Activated B cell treated with CpG ODN at 0.5 μM for 24 hours (primary cell): ENCODE measurements at regions of chr16 and their contacts with region 1.

Region 1: GRCh38 chr16:48365581-48366164 is 19.5 kb downstream of the SIAH1 start:
- DNase-seq: peak; percentile 74
- ATAC-seq: peak; percentile 94
- H3K4me3 Mint-ChIP-seq: peak overlapping the region; percentile 88
- H3K27ac Mint-ChIP-seq: peak overlapping the region; percentile 96
- H3K4me1 Mint-ChIP-seq: peaks cover 65% of the 10 kb centered on the region
- H3K27me3 Mint-ChIP-seq: no peaks in the 10 kb centered on the region
- CTCF ChIP-seq: no peak

Region 2: GRCh38 chr16:46973207-46973995 is 1392.3 kb before region 1 on chr16 and contains the start of gene DNAJA2:
- CTCF ChIA-PET with region 1: no interaction called
- POLR2A ChIA-PET with region 1: no interaction called
- intact Hi-C with region 1: loop called (anchors 1 kb)
- DNase-seq: peak; percentile 94
- ATAC-seq: peak; percentile 93
- H3K4me3 Mint-ChIP-seq: peak within 1 kb of the TSS; percentile 95
- H3K27ac Mint-ChIP-seq: peak within 1 kb of the TSS; percentile 98
- H3K4me1 Mint-ChIP-seq: peaks cover 44% of the 10 kb centered on the region
- H3K27me3 Mint-ChIP-seq: no peaks in the 10 kb centered on the region
- CTCF ChIP-seq: no peak
- total RNA-seq, gene DNAJA2: 54.4 and 57.1 TPM in 2 replicates

Region 3: DNA sequence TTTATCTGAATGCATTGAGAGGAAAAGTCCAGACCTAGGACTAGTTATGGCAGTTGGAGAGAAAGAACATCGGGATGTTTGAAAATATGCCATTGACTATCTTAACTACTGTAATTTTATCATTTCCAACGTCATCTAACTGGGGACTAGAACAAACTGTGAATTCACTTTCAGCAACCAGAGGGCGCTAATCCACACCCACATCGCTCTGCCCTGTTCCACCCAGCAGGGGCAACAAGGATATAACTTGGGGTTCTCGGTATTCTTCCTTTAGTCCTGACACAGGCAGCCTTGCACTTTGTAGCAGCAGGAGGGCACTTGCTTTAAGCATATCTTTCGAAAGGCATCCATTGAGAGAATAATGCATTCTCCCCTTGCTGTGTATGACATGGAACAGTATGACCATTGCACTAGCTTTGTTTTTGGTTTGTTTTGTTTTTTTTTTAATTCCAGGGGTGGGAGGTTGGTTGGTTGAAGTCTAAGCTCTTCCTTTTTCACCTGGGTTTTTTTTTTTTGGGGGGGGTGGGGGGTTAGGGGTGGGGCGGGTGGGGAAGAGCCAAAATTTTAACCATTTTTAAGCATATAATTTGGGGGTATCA is 12.0 kb before region 1 on chr16:
- CTCF ChIA-PET with region 1: interaction called, 3 read pairs
- POLR2A ChIA-PET with region 1: interaction called, 10 read pairs
- intact Hi-C with region 1: no loop called
- DNase-seq: no peak
- ATAC-seq: peak; percentile 93
- H3K4me3 Mint-ChIP-seq: no peak overlapping the region
- H3K27ac Mint-ChIP-seq: peak overlapping the region; percentile 5
- H3K4me1 Mint-ChIP-seq: peaks cover 28% of the 10 kb centered on the region
- H3K27me3 Mint-ChIP-seq: no peaks in the 10 kb centered on the region
- CTCF ChIP-seq: peak; percentile 53

Region 4: GRCh38 chr16:48432136-48432535 is 66.5 kb after region 1 on chr16:
- CTCF ChIA-PET with region 1: no interaction called
- POLR2A ChIA-PET with region 1: interaction called, 5 read pairs
- intact Hi-C with region 1: loop called (anchors 5 kb)
- DNase-seq: peak; percentile 27
- ATAC-seq: peak; percentile 81
- H3K4me3 Mint-ChIP-seq: peak overlapping the region; percentile 78
- H3K27ac Mint-ChIP-seq: peak overlapping the region; percentile 99
- H3K4me1 Mint-ChIP-seq: peaks cover 78% of the 10 kb centered on the region
- H3K27me3 Mint-ChIP-seq: no peaks in the 10 kb centered on the region
- CTCF ChIP-seq: no peak

Region 5: GRCh38 chr16:48586083-48586482 is 220.4 kb after region 1 on chr16:
- CTCF ChIA-PET with region 1: no interaction called
- POLR2A ChIA-PET with region 1: no interaction called
- intact Hi-C with region 1: no loop called
- DNase-seq: no peak
- ATAC-seq: no peak
- H3K4me3 Mint-ChIP-seq: no peak overlapping the region
- H3K27ac Mint-ChIP-seq: no peak overlapping the region
- H3K4me1 Mint-ChIP-seq: peaks cover 10% of the 10 kb centered on the region
- H3K27me3 Mint-ChIP-seq: no peaks in the 10 kb centered on the region
- CTCF ChIP-seq: no peak

Region 6: GRCh38 chr16:48597563-48598387 is 232.1 kb after region 1 on chr16:
- CTCF ChIA-PET with region 1: no interaction called
- POLR2A ChIA-PET with region 1: interaction called, 16 read pairs
- intact Hi-C with region 1: no loop called
- DNase-seq: no peak
- ATAC-seq: peak; percentile 21
- H3K4me3 Mint-ChIP-seq: no peak overlapping the region
- H3K27ac Mint-ChIP-seq: no peak overlapping the region
- H3K4me1 Mint-ChIP-seq: peaks cover 49% of the 10 kb centered on the region
- H3K27me3 Mint-ChIP-seq: no peaks in the 10 kb centered on the region
- CTCF ChIP-seq: no peak